Heart left ventricle (tissue), 16 donors: ENCODE measurements at regions of chr7 and their contacts with region 1.

Region 1: GRCh38 chr7:119935418-119936025 is 337.5 kb upstream of the KCND2 start:
- DNase-seq: no peak
- ATAC-seq: no peak
- H3K4me3 ChIP-seq: no peak overlapping the region
- H3K27ac ChIP-seq: no peak overlapping the region
- H3K4me1 ChIP-seq: no peaks in the 10 kb centered on the region
- H3K27me3 ChIP-seq: peaks cover 0 to 6% (median 0%) of the 10 kb centered on the region in 9 donors
- CTCF ChIP-seq: peak in 11 of 12 donors; percentile 13 to 61 (median 42)
- POLR2A ChIP-seq: no peak

Region 2: DNA sequence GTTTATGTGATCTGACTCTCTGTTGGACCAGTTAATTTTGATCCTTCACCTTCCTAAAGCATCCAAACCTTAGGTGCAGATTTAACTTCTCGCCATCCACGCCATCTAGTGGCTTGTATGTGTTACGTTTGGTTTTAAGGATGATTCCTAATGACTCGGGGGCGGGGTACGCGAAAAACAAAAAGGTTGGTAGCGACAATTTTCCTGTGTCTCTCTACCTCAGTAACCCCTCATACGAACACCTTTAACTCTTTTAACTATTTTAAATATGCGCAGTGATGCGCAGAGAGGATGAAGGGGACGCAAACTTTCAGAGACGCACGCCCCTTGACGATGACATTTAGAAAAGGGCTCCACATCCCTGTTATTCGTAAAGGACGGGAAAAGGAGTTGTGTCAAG is 336.7 kb after region 1 on chr7:
- intact Hi-C with region 1: loop called (anchors 2 to 10 kb)
- DNase-seq: no peak
- ATAC-seq: peak in 1 of 4 donors; percentile 79
- H3K4me3 ChIP-seq: peak overlapping the region in 10 of 12 donors; percentile 22 to 57 (median 44)
- H3K27ac ChIP-seq: no peak overlapping the region
- H3K4me1 ChIP-seq: peaks cover 0 to 16% (median 0%) of the 10 kb centered on the region in 12 donors
- H3K27me3 ChIP-seq: peaks cover 0 to 25% (median 14%) of the 10 kb centered on the region in 9 donors
- CTCF ChIP-seq: peak; percentile 25 to 64 (median 50)
- POLR2A ChIP-seq: no peak

Region 3: GRCh38 chr7:120554960-120555571 is 619.5 kb after region 1 on chr7:
- intact Hi-C with region 1: loop called in 1 of 10 experiments (anchors 10 kb)
- DNase-seq: peak in 2 of 5 donors; percentile 11 to 23
- ATAC-seq: peak in 1 of 4 donors; percentile 49
- H3K4me3 ChIP-seq: no peak overlapping the region
- H3K27ac ChIP-seq: no peak overlapping the region
- H3K4me1 ChIP-seq: no peaks in the 10 kb centered on the region
- H3K27me3 ChIP-seq: peaks cover 0 to 14% (median 0%) of the 10 kb centered on the region in 9 donors
- CTCF ChIP-seq: peak in 11 of 12 donors; percentile 28 to 66 (median 49)
- POLR2A ChIP-seq: no peak

Region 4: DNA sequence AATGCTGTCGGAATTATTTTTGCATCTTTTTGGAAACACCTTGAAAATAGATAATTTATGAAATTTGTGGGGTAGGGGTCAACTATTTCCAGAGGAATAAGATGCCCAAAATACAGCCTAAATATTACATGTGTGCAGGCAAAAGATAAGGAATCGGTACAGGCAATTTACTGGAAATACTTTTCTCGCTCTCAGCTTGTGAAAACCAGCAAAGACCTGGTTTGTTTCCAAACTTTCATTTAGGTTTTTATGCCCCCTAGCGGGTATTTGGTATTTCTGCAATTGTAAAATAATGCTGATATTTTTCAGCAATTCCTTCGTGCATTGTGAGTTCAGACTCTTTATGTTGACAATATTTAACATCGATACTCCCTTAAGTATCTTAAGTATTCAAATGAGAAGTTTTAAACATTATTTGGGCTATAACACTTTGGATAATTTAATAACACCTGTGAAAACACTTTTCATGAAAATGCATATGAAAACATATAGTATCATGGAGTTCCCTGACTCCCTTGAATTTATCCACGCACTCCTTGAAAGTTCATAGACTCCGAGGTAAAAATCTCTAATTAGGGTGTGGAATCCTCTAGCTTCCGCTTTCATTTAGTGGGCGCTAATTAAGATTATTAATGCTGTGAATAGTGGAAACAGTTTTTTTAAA is 790.0 kb after region 1 on chr7:
- intact Hi-C with region 1: loop called in 2 of 10 experiments (anchors 10 kb)
- DNase-seq: no peak
- ATAC-seq: no peak
- H3K4me3 ChIP-seq: peak overlapping the region in 2 of 12 donors; percentile 8 to 13
- H3K27ac ChIP-seq: no peak overlapping the region
- H3K4me1 ChIP-seq: peaks cover 0 to 3% (median 0%) of the 10 kb centered on the region in 12 donors
- H3K27me3 ChIP-seq: no peaks in the 10 kb centered on the region
- CTCF ChIP-seq: peak; percentile 39 to 75 (median 64)
- POLR2A ChIP-seq: no peak